Activated CD4-positive, alpha-beta T cell treated with anti-CD3 and anti-CD28 coated beads, Interleukin-2, amount 10 ng/mL, durations not matched to agents 7 days and 5 days (primary cell): ENCODE measurements at regions of chrX and their contacts with region 1.

Region 1: DNA sequence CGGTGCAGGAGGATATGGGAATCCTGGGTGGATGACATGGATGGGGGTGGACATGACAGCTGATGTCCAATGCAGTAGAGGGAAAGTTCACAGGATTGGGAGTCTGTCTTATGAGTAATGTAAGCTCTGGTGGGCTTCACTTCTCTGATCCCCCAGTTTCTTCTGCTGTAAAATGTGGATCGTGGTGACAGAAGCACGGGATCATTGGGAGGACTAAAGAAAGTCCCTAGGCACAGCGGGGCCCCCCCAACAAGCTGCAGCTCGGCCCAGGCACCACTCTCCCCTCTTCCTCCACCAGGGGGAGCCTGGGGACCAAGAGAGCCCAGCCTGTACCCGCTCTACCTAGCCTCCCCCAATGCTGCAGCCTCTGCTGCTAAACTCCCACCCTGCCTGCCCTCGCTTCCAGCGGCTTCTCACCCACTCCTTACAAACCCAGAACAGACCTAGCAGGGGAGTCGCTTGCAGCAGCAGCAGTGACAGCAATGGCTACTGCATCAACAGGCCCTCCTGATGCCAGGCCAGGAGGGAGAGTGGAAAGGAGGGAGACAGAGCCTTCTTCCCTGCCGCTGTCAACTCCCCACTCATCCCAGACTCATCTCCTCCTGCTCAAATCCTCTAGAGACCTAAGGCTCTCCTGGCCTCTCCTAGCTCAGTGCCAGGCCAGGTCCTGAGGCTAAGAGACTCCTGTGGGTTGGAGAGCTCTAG is 36.1 kb upstream of the IQSEC2 start:
- DNase-seq: peak; percentile 64
- H3K4me3 Mint-ChIP-seq: no peak overlapping the region
- H3K27ac Mint-ChIP-seq: no peak overlapping the region
- H3K4me1 Mint-ChIP-seq: peaks cover 15% of the 10 kb centered on the region
- H3K27me3 Mint-ChIP-seq: peaks cover 36% of the 10 kb centered on the region

Region 2: DNA sequence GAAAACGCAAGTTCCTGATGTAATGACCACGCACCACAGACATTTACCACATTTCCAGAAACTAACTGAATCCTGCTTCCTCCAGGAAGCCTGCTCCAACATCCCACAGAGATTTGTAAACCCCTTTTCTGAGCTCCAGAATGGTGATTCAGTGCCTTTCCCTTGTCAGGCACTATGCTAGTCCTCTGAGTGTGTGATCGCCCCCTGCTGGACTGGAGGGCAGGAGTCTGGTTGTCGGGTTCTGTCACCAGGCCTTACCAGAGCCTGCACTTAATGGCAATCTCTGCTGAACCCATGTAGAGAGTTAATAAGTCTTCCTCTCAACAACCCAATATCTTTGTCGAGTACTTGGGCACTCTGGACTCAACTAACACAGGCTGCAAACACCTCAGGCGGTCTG is 78.0 kb before region 1 on chrX:
- CTCF ChIA-PET with region 1: no interaction called
- POLR2A ChIA-PET with region 1: no interaction called
- DNase-seq: peak; percentile 64
- H3K4me3 Mint-ChIP-seq: no peak overlapping the region
- H3K27ac Mint-ChIP-seq: no peak overlapping the region
- H3K4me1 Mint-ChIP-seq: no peaks in the 10 kb centered on the region
- H3K27me3 Mint-ChIP-seq: no peaks in the 10 kb centered on the region

Region 3: DNA sequence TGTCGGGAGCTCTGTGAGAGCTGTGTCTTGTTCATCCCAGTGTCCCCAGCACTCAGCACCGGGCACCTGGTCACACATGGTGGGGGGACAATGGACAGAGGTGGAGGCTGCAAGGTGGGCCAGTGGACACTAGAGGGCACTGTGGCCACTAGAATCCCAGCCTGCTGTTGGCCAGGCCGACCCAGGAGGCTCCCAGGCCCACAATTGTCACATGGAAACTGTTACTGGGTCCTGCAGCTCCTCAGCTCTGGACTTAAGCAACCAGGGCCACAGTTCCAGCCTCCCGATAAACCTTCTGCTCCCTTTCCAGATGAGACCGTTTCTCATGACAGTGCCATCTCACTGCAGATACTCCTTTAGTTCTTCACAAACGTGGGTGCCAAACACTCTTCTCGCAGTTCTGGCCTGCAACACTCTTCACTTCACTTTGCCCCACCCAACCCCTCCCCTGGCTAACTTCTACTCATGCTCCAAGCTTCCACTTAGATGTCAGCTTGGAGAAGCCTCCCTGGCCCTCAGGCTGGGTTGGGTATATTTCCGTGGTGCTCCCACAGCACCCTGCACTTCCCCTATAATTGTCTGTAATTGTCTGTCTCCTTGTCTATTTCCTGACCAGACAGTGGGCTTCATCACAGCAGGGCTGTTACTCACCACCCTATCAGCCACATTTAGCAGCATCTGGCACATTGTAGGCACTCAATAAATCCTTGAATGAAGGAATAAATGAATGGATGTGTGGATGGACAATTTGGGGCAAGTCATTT is 32.7 kb before region 1 on chrX:
- CTCF ChIA-PET with region 1: interaction called, 10 read pairs
- POLR2A ChIA-PET with region 1: no interaction called
- DNase-seq: peak; percentile 49
- H3K4me3 Mint-ChIP-seq: no peak overlapping the region
- H3K27ac Mint-ChIP-seq: peak overlapping the region; percentile 46
- H3K4me1 Mint-ChIP-seq: peaks cover 39% of the 10 kb centered on the region
- H3K27me3 Mint-ChIP-seq: no peaks in the 10 kb centered on the region

Region 4: GRCh38 chrX:53300157-53300556 is 17.4 kb before region 1 on chrX:
- CTCF ChIA-PET with region 1: interaction called, 10 read pairs
- POLR2A ChIA-PET with region 1: no interaction called
- DNase-seq: no peak
- H3K4me3 Mint-ChIP-seq: no peak overlapping the region
- H3K27ac Mint-ChIP-seq: no peak overlapping the region
- H3K4me1 Mint-ChIP-seq: no peaks in the 10 kb centered on the region
- H3K27me3 Mint-ChIP-seq: peaks cover 7% of the 10 kb centered on the region

Region 5: GRCh38 chrX:53433651-53434639 is 116.4 kb after region 1 on chrX and contains the start of gene HSD17B10:
- CTCF ChIA-PET with region 1: interaction called, 10 read pairs
- POLR2A ChIA-PET with region 1: no interaction called
- DNase-seq: peak; percentile 89
- H3K4me3 Mint-ChIP-seq: peak within 1 kb of the TSS; percentile 86
- H3K27ac Mint-ChIP-seq: peak within 1 kb of the TSS; percentile 83
- H3K4me1 Mint-ChIP-seq: peaks cover 30% of the 10 kb centered on the region
- H3K27me3 Mint-ChIP-seq: no peaks in the 10 kb centered on the region
- total RNA-seq, gene HSD17B10: 99.6 to 105 TPM

Region 6: GRCh38 chrX:53445977-53446376 is 128.5 kb after region 1 on chrX:
- CTCF ChIA-PET with region 1: interaction called, 13 read pairs
- POLR2A ChIA-PET with region 1: no interaction called
- DNase-seq: peak; percentile 57
- H3K4me3 Mint-ChIP-seq: no peak overlapping the region
- H3K27ac Mint-ChIP-seq: no peak overlapping the region
- H3K4me1 Mint-ChIP-seq: peaks cover 11% of the 10 kb centered on the region
- H3K27me3 Mint-ChIP-seq: no peaks in the 10 kb centered on the region

Region 7: DNA sequence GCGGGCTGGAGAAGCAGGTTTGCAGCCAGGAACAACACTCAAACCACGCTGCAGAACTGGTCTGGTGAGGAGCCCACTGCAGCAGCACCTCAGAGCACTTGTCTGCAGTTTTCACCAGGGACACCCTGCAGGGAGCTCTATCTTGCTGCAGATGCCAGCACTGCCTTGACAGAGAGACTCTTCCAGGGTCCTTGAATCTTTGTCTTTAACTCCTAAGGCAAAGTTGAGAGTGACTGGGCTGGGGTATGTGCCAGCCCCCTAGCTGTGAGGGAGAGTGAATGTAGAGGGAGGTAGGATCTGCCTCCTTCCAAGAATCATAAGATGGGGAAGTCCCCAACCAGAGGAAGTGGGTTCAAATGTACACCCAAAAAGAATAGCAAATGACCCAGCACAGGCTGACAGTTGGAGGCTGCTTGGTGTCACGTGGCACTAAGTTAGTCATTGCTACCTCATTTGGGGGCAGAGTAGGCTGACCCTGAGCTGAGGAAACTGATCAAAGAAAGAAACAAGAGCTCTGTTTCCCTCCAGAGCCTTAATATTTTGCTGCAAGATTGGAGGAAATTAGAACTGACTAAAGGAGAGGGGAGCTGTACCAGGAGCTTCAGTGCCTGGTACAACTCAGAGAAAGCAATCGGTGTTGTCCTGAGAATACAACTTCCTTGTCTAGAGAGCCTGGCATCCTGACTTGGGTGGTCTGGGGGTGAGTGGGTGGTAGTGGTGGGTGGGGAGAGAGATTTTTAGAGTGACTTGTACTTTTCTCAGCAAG is 397.2 kb after region 1 on chrX:
- CTCF ChIA-PET with region 1: no interaction called
- POLR2A ChIA-PET with region 1: no interaction called
- DNase-seq: peak; percentile 77
- H3K4me3 Mint-ChIP-seq: peak overlapping the region; percentile 76
- H3K27ac Mint-ChIP-seq: peak overlapping the region; percentile 99
- H3K4me1 Mint-ChIP-seq: peaks cover 60% of the 10 kb centered on the region
- H3K27me3 Mint-ChIP-seq: no peaks in the 10 kb centered on the region